ENCODE measurements at regions of chr11 and their contacts with region 1.

Region 1: DNA sequence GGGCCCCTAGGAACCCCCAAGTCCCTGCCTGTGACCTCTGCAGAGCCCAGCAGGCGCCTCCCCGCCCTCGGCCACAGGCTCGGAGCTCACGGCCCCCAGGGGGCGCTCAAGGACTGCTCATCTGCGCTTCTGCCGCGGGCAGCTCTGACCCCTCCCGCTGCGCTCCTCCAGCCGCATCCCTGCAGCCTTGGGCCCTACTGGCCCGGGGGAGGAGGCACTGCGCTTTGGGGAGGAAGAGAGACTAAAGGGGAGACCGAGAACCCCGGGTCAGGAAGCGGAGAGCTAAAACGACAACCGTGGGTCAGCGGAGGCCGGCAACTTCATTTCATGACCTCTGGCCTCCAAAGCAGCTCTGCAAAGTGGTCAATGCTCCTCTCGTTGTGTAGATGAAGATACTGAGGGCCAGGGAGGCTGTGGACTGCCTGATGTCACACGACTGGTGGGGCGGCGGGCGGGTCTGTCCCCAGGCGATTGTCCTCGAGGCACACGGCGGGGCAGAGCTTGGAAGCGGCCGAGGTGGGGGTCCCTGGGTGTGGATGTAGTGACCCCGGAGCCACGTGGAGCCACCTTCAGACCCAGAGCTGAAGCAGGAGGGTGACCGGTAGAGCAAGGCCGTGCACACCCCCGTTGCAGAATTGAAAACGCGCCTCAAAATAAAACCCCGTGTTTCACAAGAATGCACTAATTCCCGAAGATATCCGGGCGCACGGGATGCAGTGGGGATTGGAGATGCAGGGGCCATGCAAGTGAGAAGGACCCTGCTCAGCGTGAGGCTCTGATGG is 2.7 kb upstream of the KRTAP5-6 start:
- DNase-seq: no peak
- ATAC-seq: peak; percentile 99
- H3K4me3 ChIP-seq: no peak overlapping the region
- H3K27ac ChIP-seq: no peak overlapping the region
- H3K4me1 ChIP-seq: no peaks in the 10 kb centered on the region
- H3K27me3 ChIP-seq: peaks cover 3 to 4% of the 10 kb centered on the region in 2 experiments; a peak in 2 of 4 replicates
- CTCF ChIP-seq: peak; percentile 80 to 94 (median 92); a peak in 5 of 6 replicates
- EP300 ChIP-seq: no peak
- POLR2A ChIP-seq: no peak
- RAD21 ChIP-seq: peak; percentile 89

Region 2: DNA sequence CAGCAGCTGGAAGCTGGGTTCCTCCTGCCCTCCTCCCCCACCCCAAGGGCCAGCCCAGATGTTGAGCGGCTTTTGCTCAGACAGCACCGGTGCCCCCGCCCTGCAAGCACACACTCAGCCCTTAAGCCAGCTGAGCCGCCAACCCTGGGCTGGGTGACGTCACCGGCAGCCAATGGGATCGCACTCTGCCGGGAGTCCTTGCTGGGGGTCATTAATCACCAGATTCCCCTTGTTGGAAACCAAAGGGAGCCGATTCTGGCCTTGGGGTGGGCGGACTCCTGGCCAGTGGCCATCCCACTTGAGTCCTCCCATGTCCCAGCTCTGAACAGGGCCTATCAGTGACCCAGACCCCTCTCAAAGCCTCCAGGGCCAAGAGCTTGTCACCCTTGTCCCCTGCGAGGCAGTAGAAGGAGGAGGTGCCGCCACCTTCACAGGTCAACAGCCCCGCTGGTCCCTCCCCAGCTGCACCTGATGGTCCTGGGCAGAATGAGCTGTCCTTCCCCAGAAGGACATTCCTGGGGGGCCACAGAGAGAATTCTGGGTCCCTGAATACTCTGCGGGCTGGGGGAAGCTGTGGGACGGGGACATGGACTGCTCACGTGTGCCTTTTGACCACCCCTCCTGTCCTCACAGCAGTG is 129.6 kb before region 1 on chr11:
- CTCF ChIA-PET with region 1: no interaction called
- POLR2A ChIA-PET with region 1: no interaction called
- RAD21 ChIA-PET with region 1: no interaction called
- SMC1A ChIA-PET with region 1: no interaction called
- in situ Hi-C with region 1: no loop called
- intact Hi-C with region 1: no loop called
- DNase-seq: no peak
- ATAC-seq: peak; percentile 39; the same call in 2 of the 3 replicates
- H3K4me3 ChIP-seq: no peak overlapping the region
- H3K27ac ChIP-seq: no peak overlapping the region
- H3K4me1 ChIP-seq: no peaks in the 10 kb centered on the region
- H3K27me3 ChIP-seq: peaks cover 0 to 3% of the 10 kb centered on the region in 2 experiments; a peak in 2 of 4 replicates
- CTCF ChIP-seq: no peak
- EP300 ChIP-seq: no peak
- POLR2A ChIP-seq: no peak
- RAD21 ChIP-seq: no peak

Region 3: GRCh38 chr11:1652771-1653540 is 41.3 kb before region 1 on chr11:
- CTCF ChIA-PET with region 1: interaction called, 22 read pairs
- POLR2A ChIA-PET with region 1: no interaction called
- RAD21 ChIA-PET with region 1: interaction called, 15 read pairs
- SMC1A ChIA-PET with region 1: interaction called, 4 read pairs
- in situ Hi-C with region 1: no loop called
- intact Hi-C with region 1: loop called (anchors 5 kb)
- DNase-seq: no peak
- ATAC-seq: peak; percentile 97
- H3K4me3 ChIP-seq: no peak overlapping the region
- H3K27ac ChIP-seq: no peak overlapping the region
- H3K4me1 ChIP-seq: no peaks in the 10 kb centered on the region
- H3K27me3 ChIP-seq: peaks cover 0 to 3% of the 10 kb centered on the region in 2 experiments; a peak in 2 of 4 replicates
- CTCF ChIP-seq: peak; percentile 90 to 94 (median 91)
- EP300 ChIP-seq: no peak
- POLR2A ChIP-seq: no peak
- RAD21 ChIP-seq: peak; percentile 83

Region 4: DNA sequence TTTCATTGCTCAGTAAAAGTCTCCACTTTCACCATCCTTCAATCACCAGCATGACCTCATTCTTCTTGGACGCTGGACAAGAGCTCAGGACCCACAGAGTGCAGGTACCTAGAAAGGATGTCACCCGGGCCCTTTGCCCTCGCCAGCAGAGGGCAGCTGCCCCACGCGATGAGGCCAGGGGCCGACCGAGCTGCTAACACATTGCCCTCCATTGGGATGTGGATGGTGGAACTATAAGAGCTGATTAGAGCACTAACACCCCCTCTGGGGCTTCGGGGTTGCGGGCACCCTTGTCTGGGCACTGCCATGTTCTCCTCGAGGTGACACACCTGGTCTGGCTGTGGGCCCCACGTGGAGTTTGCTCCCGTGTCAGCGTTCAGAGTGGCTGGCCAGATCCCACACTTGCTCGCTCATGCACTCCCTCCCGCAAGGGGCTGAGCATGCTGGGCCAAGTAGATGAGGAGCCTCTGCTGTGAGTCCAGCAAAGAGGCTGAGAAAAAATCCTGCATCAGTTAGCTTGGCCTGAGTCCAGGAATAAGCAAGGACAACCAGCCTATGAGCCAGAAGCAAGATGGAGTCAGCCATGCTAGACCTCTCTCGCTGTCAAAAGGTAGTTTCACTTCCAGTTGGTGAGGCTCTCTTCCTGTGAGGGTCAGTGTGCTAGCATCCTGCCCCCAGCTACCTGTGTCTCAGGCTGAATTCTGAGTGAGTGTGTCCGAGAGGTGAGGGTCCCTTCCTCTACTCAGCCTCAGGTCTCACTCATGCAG is 12.6 kb after region 1 on chr11:
- CTCF ChIA-PET with region 1: interaction called, 19 read pairs
- POLR2A ChIA-PET with region 1: no interaction called
- RAD21 ChIA-PET with region 1: interaction called, 4 read pairs
- SMC1A ChIA-PET with region 1: interaction called, 3 read pairs
- in situ Hi-C with region 1: no loop called
- intact Hi-C with region 1: no loop called
- DNase-seq: no peak
- ATAC-seq: peak; percentile 38; the same call in 2 of the 3 replicates
- H3K4me3 ChIP-seq: no peak overlapping the region
- H3K27ac ChIP-seq: no peak overlapping the region
- H3K4me1 ChIP-seq: peaks cover 14% of the 10 kb centered on the region
- H3K27me3 ChIP-seq: peaks cover 0 to 2% of the 10 kb centered on the region in 2 experiments; a peak in 1 of 4 replicates
- CTCF ChIP-seq: peak; percentile 17 to 23 (median 17); a peak in 2 of 6 replicates
- EP300 ChIP-seq: no peak
- POLR2A ChIP-seq: no peak
- RAD21 ChIP-seq: no peak

Region 5: GRCh38 chr11:1749414-1750312 is 55.4 kb after region 1 on chr11:
- CTCF ChIA-PET with region 1: no interaction called
- POLR2A ChIA-PET with region 1: no interaction called
- RAD21 ChIA-PET with region 1: no interaction called
- SMC1A ChIA-PET with region 1: no interaction called
- in situ Hi-C with region 1: no loop called
- intact Hi-C with region 1: no loop called
- DNase-seq: no peak
- ATAC-seq: no peak
- H3K4me3 ChIP-seq: no peak overlapping the region
- H3K27ac ChIP-seq: no peak overlapping the region
- H3K4me1 ChIP-seq: no peaks in the 10 kb centered on the region
- H3K27me3 ChIP-seq: no peaks in the 10 kb centered on the region; a peak in 1 of 4 replicates
- CTCF ChIP-seq: no peak
- EP300 ChIP-seq: no peak
- POLR2A ChIP-seq: no peak
- RAD21 ChIP-seq: no peak

Region 6: GRCh38 chr11:1832211-1832919 is 138.1 kb after region 1 on chr11:
- CTCF ChIA-PET with region 1: interaction called, 187 read pairs
- POLR2A ChIA-PET with region 1: no interaction called
- RAD21 ChIA-PET with region 1: interaction called, 107 read pairs
- SMC1A ChIA-PET with region 1: interaction called, 65 read pairs
- in situ Hi-C with region 1: no loop called
- intact Hi-C with region 1: loop called (anchors 1 kb)
- DNase-seq: no peak
- ATAC-seq: peak; percentile 81
- H3K4me3 ChIP-seq: no peak overlapping the region
- H3K27ac ChIP-seq: no peak overlapping the region
- H3K4me1 ChIP-seq: no peaks in the 10 kb centered on the region
- H3K27me3 ChIP-seq: no peaks in the 10 kb centered on the region; a peak in 2 of 4 replicates
- CTCF ChIP-seq: peak; percentile 76 to 95 (median 76)
- EP300 ChIP-seq: no peak
- POLR2A ChIP-seq: no peak
- RAD21 ChIP-seq: peak; percentile 68

Region 7: GRCh38 chr11:1852877-1853276 is 158.6 kb after region 1 on chr11 and contains the start of gene LSP1:
- CTCF ChIA-PET with region 1: interaction called, 10 read pairs
- POLR2A ChIA-PET with region 1: no interaction called
- RAD21 ChIA-PET with region 1: interaction called, 3 read pairs
- SMC1A ChIA-PET with region 1: interaction called, 3 read pairs
- in situ Hi-C with region 1: no loop called
- intact Hi-C with region 1: no loop called
- DNase-seq: peak; percentile 92
- ATAC-seq: peak; percentile 57
- H3K4me3 ChIP-seq: peak within 1 kb of the TSS; percentile 96
- H3K27ac ChIP-seq: peak within 1 kb of the TSS; percentile 99
- H3K4me1 ChIP-seq: peaks cover 60% of the 10 kb centered on the region
- H3K27me3 ChIP-seq: no peaks in the 10 kb centered on the region
- CTCF ChIP-seq: no peak
- EP300 ChIP-seq: peak; percentile 97 to 98
- POLR2A ChIP-seq: peak; percentile 89
- RAD21 ChIP-seq: peak; percentile 43; the same call in 1 of the 2 replicates
- polyA plus RNA-seq, gene LSP1: 19.2 to 34.2 TPM

Measured in GM12878 (cell line).